IMR-90 (cell line): ENCODE measurements at regions of chr11 and their contacts with region 1.

Region 1: DNA sequence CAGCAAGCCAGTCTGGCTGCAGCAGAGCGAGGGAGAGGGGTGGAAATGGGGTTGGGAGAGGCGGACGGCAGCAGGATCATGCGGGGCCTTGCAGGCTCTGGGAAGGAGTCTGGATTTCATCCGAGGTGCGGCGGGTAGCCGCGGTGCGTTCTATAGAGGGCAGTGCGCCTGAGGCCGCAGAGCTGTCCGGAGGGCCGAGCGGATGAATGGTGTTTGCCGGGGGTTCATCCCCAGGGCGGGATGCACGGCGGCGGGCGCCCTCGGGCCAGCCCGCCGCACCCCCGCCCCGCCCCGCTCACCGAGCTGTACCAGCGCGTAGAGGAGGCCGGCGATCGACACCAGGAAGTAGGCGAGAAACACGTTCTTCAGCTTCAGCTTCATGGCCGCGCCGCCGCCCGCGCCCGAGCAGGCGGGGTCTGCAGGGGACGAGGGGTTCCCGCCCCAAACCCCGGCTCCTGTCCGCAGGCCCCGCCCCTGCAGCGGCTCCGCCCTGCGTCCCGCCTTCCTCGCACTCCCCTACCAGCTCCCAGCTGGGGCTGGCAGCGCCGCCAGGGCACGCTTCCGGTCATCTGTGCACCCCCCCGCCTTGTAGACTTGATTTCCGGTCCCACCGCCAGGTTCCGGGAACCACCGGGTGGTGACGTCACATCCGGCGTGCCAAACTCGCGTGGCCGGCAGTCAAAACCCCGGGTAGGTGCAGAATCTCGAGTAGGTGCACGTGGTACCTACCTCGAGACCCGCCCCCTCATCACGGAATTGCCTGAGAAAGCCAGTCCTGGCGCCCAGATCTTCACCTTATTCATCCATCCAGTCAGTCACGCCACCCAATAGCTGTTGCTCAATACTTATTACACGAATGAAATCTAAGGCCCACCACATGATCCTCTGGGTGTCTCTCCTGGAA is at the start of gene B3GAT3:
- DNase-seq: peak; percentile 98
- ATAC-seq: peak; percentile 99
- H3K4me3 ChIP-seq: peak within 1 kb of the TSS; percentile 89
- H3K27ac ChIP-seq: peak within 1 kb of the TSS; percentile 96
- H3K4me1 ChIP-seq: peaks cover 3% of the 10 kb centered on the region
- H3K27me3 ChIP-seq: no peaks in the 10 kb centered on the region
- CTCF ChIP-seq: peak; percentile 14; the same call in 1 of the 2 replicates
- POLR2A ChIP-seq: peak; percentile 45; the same call in 1 of the 2 replicates
- RAD21 ChIP-seq: no peak
- total RNA-seq, gene B3GAT3: 10.4 and 10.6 TPM in 2 replicates

Region 2: GRCh38 chr11:62370743-62371440 is 250.9 kb before region 1 on chr11:
- CTCF ChIA-PET with region 1: no interaction called
- POLR2A ChIA-PET with region 1: no interaction called
- dilution Hi-C with region 1: no loop called
- in situ Hi-C with region 1: no loop called
- intact Hi-C with region 1: no loop called
- DNase-seq: no peak
- ATAC-seq: no peak; the same call in 1 of the 2 replicates
- H3K4me3 ChIP-seq: no peak overlapping the region
- H3K27ac ChIP-seq: no peak overlapping the region
- H3K4me1 ChIP-seq: no peaks in the 10 kb centered on the region
- H3K27me3 ChIP-seq: peaks cover 14% of the 10 kb centered on the region; the same call in 1 of the 2 replicates
- CTCF ChIP-seq: no peak
- POLR2A ChIP-seq: no peak
- RAD21 ChIP-seq: no peak

Region 3: GRCh38 chr11:62551696-62552250 is 70.0 kb before region 1 on chr11:
- CTCF ChIA-PET with region 1: no interaction called
- POLR2A ChIA-PET with region 1: no interaction called
- dilution Hi-C with region 1: no loop called
- in situ Hi-C with region 1: no loop called
- intact Hi-C with region 1: no loop called
- DNase-seq: peak; percentile 68
- ATAC-seq: no peak
- H3K4me3 ChIP-seq: no peak overlapping the region
- H3K27ac ChIP-seq: peak overlapping the region; percentile 19; the same call in 1 of the 2 replicates
- H3K4me1 ChIP-seq: peaks cover 41% of the 10 kb centered on the region
- H3K27me3 ChIP-seq: no peaks in the 10 kb centered on the region
- CTCF ChIP-seq: no peak
- POLR2A ChIP-seq: no peak
- RAD21 ChIP-seq: no peak

Region 4: GRCh38 chr11:62925745-62926679 is 304.2 kb after region 1 on chr11:
- CTCF ChIA-PET with region 1: no interaction called
- POLR2A ChIA-PET with region 1: interaction called, 15 read pairs
- dilution Hi-C with region 1: no loop called
- in situ Hi-C with region 1: no loop called
- intact Hi-C with region 1: no loop called
- DNase-seq: no peak
- ATAC-seq: peak; percentile 5; the same call in 1 of the 2 replicates
- H3K4me3 ChIP-seq: peak overlapping the region; percentile 10; the same call in 1 of the 2 replicates
- H3K27ac ChIP-seq: no peak overlapping the region
- H3K4me1 ChIP-seq: peaks cover 8% of the 10 kb centered on the region; the same call in 1 of the 2 replicates
- H3K27me3 ChIP-seq: peaks cover 85% of the 10 kb centered on the region
- CTCF ChIP-seq: no peak
- POLR2A ChIP-seq: no peak
- RAD21 ChIP-seq: no peak